ENCODE measurements at regions of chr5 and their contacts with region 1.

Region 1: DNA sequence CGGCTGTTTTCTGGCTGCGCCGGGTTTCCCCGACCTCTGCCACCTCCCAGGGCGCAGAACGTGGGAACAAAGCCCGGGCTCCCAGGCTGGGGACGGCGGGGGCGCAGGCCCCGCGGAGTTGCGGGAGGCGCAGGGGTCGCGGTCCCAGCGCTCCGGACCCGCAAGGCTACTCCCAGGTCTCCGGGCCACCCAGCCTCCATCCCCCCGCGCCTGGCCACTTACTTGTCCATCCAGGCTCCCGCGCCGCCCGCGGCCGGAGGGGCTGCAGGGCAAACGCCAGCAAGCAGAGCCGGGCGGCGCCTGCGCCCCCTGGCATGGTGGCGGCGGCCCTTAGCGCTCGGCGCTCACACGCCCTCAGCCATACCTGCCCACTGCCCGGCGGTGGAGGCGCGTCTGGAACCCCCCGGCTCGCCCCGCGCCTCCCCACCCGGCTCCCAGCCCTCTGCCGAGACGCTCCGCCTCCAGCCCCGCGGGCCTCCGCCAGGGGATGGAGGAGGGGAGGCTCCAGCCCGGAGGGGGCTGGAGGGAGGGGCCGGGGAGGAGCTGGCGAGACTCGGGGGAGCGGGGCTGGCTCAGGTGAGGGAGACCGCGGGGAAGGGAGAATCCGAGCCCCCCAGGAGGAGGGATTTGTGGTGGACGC is at the start of gene ADAM19:
- DNase-seq: peak; percentile 67
- ATAC-seq: peak; percentile 47
- H3K4me3 ChIP-seq: peak within 1 kb of the TSS; percentile 94 to 99 (median 99)
- H3K4me3 Mint-ChIP-seq: peak within 1 kb of the TSS; percentile 96
- H3K27ac ChIP-seq: peak within 1 kb of the TSS; percentile 79 to 84
- H3K27ac Mint-ChIP-seq: peak within 1 kb of the TSS; percentile 95
- H3K4me1 ChIP-seq: peaks cover 44 to 65% of the 10 kb centered on the region in 2 donors
- H3K4me1 Mint-ChIP-seq: peaks cover 70% of the 10 kb centered on the region
- H3K27me3 ChIP-seq: no peaks in the 10 kb centered on the region
- H3K27me3 Mint-ChIP-seq: no peaks in the 10 kb centered on the region
- CTCF ChIP-seq: peak; percentile 18
- total RNA-seq, gene ADAM19: 171 TPM in 2 replicates

Region 2: GRCh38 chr5:157486221-157486681 is 89.2 kb before region 1 on chr5:
- CTCF ChIA-PET with region 1: interaction called, 8 read pairs
- POLR2A ChIA-PET with region 1: interaction called, 3 read pairs
- intact Hi-C with region 1: loop called (anchors 5 kb)
- DNase-seq: peak; percentile 66
- ATAC-seq: peak; percentile 46
- H3K4me3 ChIP-seq: peak overlapping the region in 1 of 5 experiments; percentile 20
- H3K4me3 Mint-ChIP-seq: peak overlapping the region; percentile 65
- H3K27ac ChIP-seq: peak overlapping the region; percentile 94 to 100
- H3K27ac Mint-ChIP-seq: peak overlapping the region; percentile 95
- H3K4me1 ChIP-seq: peaks cover 66 to 77% of the 10 kb centered on the region in 2 donors
- H3K4me1 Mint-ChIP-seq: peaks cover 82% of the 10 kb centered on the region
- H3K27me3 ChIP-seq: no peaks in the 10 kb centered on the region
- H3K27me3 Mint-ChIP-seq: no peaks in the 10 kb centered on the region
- CTCF ChIP-seq: no peak

Region 3: GRCh38 chr5:157558041-157558595 is 17.4 kb before region 1 on chr5:
- CTCF ChIA-PET with region 1: interaction called, 6 read pairs
- POLR2A ChIA-PET with region 1: interaction called, 5 read pairs
- intact Hi-C with region 1: loop called (anchors 1 kb)
- DNase-seq: no peak
- ATAC-seq: no peak
- H3K4me3 ChIP-seq: no peak overlapping the region
- H3K4me3 Mint-ChIP-seq: peak overlapping the region; percentile 23
- H3K27ac ChIP-seq: peak overlapping the region; percentile 30 to 69
- H3K27ac Mint-ChIP-seq: peak overlapping the region; percentile 85
- H3K4me1 ChIP-seq: peaks cover 84 to 87% of the 10 kb centered on the region in 2 donors
- H3K4me1 Mint-ChIP-seq: peaks cover 90% of the 10 kb centered on the region
- H3K27me3 ChIP-seq: no peaks in the 10 kb centered on the region
- H3K27me3 Mint-ChIP-seq: no peaks in the 10 kb centered on the region
- CTCF ChIP-seq: no peak

Region 4: DNA sequence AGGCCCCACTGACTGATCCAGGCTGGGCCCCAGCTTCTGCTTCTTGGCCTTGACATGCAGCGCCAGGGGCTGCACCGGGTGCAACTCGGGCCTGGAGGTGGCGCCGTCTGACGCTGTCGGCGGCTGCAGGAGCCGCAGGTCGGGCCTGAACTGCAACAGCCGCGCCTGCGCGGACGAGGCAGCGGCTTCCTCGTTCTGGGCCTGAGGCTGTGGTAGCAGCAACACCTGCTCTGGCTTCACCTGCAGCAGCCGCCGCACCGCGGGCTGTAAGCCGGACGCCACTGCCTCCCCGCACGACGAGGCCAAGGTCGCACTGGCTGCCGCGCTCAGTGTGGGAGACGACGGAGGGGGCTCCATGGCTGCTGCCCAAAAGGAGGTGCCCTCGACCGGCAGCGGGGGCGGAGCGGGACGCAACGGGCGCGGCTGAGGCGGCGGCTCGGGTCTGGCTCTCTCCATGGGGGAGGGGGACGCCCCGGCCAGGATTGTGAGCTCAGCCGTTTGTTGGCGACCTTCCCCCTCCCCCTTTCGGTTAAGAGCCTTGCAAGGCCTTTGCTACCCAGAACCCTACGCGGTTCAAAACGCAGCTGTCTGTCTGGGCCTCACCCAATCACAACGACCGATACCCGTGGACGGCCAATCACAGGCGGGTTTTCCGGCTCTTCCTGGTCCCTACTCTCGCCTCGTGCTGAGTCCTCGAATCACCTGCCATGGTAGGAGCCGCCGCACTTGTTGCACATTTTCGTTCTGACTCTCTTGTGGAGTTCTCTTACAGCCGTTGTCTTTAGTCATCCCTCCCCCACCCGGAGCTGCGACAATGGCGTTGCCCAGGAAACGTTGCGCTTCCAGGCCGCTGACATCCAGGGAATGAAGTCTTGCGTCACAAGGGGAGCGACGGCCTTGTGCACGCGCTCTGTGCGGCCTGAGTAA is 76.4 kb after region 1 on chr5 and contains the start of gene SOX30:
- CTCF ChIA-PET with region 1: interaction called, 8 read pairs
- POLR2A ChIA-PET with region 1: interaction called, 5 read pairs
- intact Hi-C with region 1: loop called (anchors 1 kb)
- DNase-seq: peak; percentile 92
- ATAC-seq: peak; percentile 97
- H3K4me3 ChIP-seq: peak within 1 kb of the TSS in 4 of 5 experiments; percentile 46 to 60 (median 58)
- H3K4me3 Mint-ChIP-seq: peak within 1 kb of the TSS; percentile 89
- H3K27ac ChIP-seq: peak within 1 kb of the TSS; percentile 67 to 77
- H3K27ac Mint-ChIP-seq: peak within 1 kb of the TSS; percentile 90
- H3K4me1 ChIP-seq: peaks cover 34 to 36% of the 10 kb centered on the region in 2 donors
- H3K4me1 Mint-ChIP-seq: peaks cover 42% of the 10 kb centered on the region
- H3K27me3 ChIP-seq: no peaks in the 10 kb centered on the region
- H3K27me3 Mint-ChIP-seq: no peaks in the 10 kb centered on the region
- CTCF ChIP-seq: peak; percentile 59
- total RNA-seq, gene SOX30: 0.29 and 0.49 TPM in 2 replicates

Region 5: DNA sequence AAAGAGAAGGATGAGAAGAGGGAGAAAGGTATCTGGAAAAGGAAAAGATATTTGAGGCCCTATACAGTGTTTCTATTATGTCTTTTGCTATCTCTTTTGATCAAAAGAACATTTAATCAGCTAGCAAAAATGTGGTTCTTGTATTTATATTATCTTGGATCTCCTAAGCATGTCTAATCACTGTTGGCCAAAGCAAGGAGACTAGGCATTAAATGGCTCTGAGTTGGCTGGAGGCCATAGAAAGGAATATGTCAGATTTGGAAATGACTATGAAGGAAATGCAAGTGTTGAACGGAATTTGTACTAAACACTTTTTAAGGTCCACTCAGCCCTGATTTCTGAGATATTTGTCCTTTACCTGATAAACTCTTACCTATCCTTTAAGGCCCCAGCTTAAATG is 133.4 kb after region 1 on chr5:
- CTCF ChIA-PET with region 1: no interaction called
- POLR2A ChIA-PET with region 1: no interaction called
- intact Hi-C with region 1: no loop called
- DNase-seq: no peak
- ATAC-seq: no peak
- H3K4me3 ChIP-seq: no peak overlapping the region
- H3K4me3 Mint-ChIP-seq: no peak overlapping the region
- H3K27ac ChIP-seq: no peak overlapping the region
- H3K27ac Mint-ChIP-seq: no peak overlapping the region
- H3K4me1 ChIP-seq: no peaks in the 10 kb centered on the region
- H3K4me1 Mint-ChIP-seq: no peaks in the 10 kb centered on the region
- H3K27me3 ChIP-seq: no peaks in the 10 kb centered on the region
- H3K27me3 Mint-ChIP-seq: no peaks in the 10 kb centered on the region
- CTCF ChIP-seq: no peak

Region 6: GRCh38 chr5:157731272-157732129 is 156.0 kb after region 1 on chr5 and contains the start of gene THG1L:
- CTCF ChIA-PET with region 1: interaction called, 4 read pairs
- POLR2A ChIA-PET with region 1: no interaction called
- intact Hi-C with region 1: loop called (anchors 1 kb)
- DNase-seq: peak; percentile 93
- ATAC-seq: peak; percentile 84
- H3K4me3 ChIP-seq: peak within 1 kb of the TSS; percentile 67 to 94 (median 93)
- H3K4me3 Mint-ChIP-seq: peak within 1 kb of the TSS; percentile 98
- H3K27ac ChIP-seq: peak within 1 kb of the TSS; percentile 92 to 94
- H3K27ac Mint-ChIP-seq: peak within 1 kb of the TSS; percentile 99
- H3K4me1 ChIP-seq: peaks cover 21 to 26% of the 10 kb centered on the region in 2 donors
- H3K4me1 Mint-ChIP-seq: peaks cover 30% of the 10 kb centered on the region
- H3K27me3 ChIP-seq: no peaks in the 10 kb centered on the region
- H3K27me3 Mint-ChIP-seq: no peaks in the 10 kb centered on the region
- CTCF ChIP-seq: no peak
- total RNA-seq, gene THG1L: 14.1 and 14.6 TPM in 2 replicates